CD8-positive, alpha-beta T cell (primary cell): ENCODE measurements at regions of chr17 and their contacts with region 1.

Region 1: DNA sequence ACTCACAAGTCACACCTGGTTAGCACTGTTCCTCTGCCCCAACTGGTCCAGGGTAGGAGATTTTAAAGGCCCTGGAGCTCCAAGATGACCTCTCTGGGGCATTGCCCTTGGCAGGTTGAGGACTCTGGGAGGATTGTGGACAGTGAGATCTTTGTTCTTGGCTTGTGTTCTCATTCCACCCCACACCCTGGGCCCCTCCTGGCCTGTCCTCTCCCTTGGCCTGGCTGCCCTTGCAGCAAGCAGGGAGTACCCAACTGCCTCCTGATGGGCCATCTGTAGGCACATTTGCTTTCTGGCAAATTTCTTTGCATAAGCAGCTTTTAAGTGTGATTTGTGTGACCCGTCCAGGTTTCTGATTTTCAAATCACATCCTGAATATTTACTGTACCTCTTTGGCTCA is 239.6 kb downstream of the UTP18 start:
- DNase-seq: no peak
- ATAC-seq: no peak
- H3K4me3 ChIP-seq: no peak overlapping the region
- H3K4me3 Mint-ChIP-seq: no peak overlapping the region
- H3K27ac ChIP-seq: no peak overlapping the region
- H3K27ac Mint-ChIP-seq: no peak overlapping the region
- H3K4me1 ChIP-seq: no peaks in the 10 kb centered on the region
- H3K4me1 Mint-ChIP-seq: no peaks in the 10 kb centered on the region
- H3K27me3 ChIP-seq: peaks cover 0 to 2% of the 10 kb centered on the region in 2 experiments
- H3K27me3 Mint-ChIP-seq: peaks cover 14% of the 10 kb centered on the region
- CTCF ChIP-seq: no peak

Region 2: GRCh38 chr17:51548125-51548524 is 48.2 kb after region 1 on chr17:
- CTCF ChIA-PET with region 1: no interaction called
- POLR2A ChIA-PET with region 1: no interaction called
- intact Hi-C with region 1: loop called in 1 of 2 experiments (anchors 5 kb)
- DNase-seq: no peak
- ATAC-seq: no peak
- H3K4me3 ChIP-seq: no peak overlapping the region
- H3K4me3 Mint-ChIP-seq: no peak overlapping the region
- H3K27ac ChIP-seq: no peak overlapping the region
- H3K27ac Mint-ChIP-seq: no peak overlapping the region
- H3K4me1 ChIP-seq: no peaks in the 10 kb centered on the region
- H3K4me1 Mint-ChIP-seq: no peaks in the 10 kb centered on the region
- H3K27me3 ChIP-seq: no peaks in the 10 kb centered on the region
- H3K27me3 Mint-ChIP-seq: peaks cover 2% of the 10 kb centered on the region
- CTCF ChIP-seq: no peak